ENCODE measurements at regions of chr6 and their contacts with region 1.

Region 1: DNA sequence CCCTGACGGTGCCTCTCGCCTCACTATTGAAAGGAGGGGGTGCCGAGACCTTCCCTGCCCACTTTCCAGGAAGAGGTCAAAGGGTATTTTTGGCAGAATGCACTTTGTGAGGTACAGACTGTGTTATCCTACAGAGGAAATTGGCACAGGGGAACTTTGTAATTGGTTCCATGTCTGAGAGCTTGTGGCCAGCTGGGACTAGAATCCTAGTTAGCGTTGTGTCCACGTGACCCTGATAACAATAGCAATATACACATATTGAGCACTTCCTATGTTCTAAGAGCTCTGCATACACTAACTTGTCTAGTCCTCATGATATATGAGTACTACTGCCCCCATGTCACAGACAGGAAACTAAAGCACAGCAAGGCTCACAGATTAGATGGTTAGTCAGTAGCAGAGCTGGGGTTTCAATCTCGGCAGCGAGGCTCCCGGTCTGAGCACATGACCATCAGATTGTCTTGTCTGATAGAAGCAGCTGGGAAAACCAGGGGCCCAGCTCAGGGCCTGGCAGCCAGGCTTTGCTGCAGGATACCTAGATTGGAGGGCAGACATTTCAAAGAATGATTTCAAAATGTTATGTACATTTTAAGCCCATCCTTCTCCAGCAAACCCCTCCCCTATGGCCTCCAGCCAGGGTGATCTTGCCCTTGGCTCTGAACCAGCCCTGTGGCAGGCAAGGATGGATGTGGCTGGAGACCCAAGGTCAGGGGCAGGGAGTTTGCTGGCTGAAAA is 1.4 kb downstream of the MAPK13 start:
- DNase-seq: peak; percentile 49
- ATAC-seq: peak; percentile 40
- H3K4me3 ChIP-seq: peak overlapping the region; percentile 19 to 78 (median 65)
- H3K4me3 Mint-ChIP-seq: peak overlapping the region; percentile 92
- H3K27ac ChIP-seq: peak overlapping the region; percentile 73 to 74
- H3K27ac Mint-ChIP-seq: peak overlapping the region; percentile 92
- H3K4me1 ChIP-seq: peaks cover 28 to 43% of the 10 kb centered on the region in 2 donors
- H3K4me1 Mint-ChIP-seq: peaks cover 56% of the 10 kb centered on the region
- H3K27me3 ChIP-seq: no peaks in the 10 kb centered on the region
- H3K27me3 Mint-ChIP-seq: no peaks in the 10 kb centered on the region
- CTCF ChIP-seq: no peak

Region 2: GRCh38 chr6:35797837-35798526 is 333.7 kb before region 1 on chr6:
- CTCF ChIA-PET with region 1: no interaction called
- POLR2A ChIA-PET with region 1: no interaction called
- intact Hi-C with region 1: no loop called
- DNase-seq: no peak
- ATAC-seq: no peak
- H3K4me3 ChIP-seq: no peak overlapping the region
- H3K4me3 Mint-ChIP-seq: no peak overlapping the region
- H3K27ac ChIP-seq: no peak overlapping the region
- H3K27ac Mint-ChIP-seq: no peak overlapping the region
- H3K4me1 ChIP-seq: no peaks in the 10 kb centered on the region
- H3K4me1 Mint-ChIP-seq: no peaks in the 10 kb centered on the region
- H3K27me3 ChIP-seq: peaks cover 0 to 10% (median 0%) of the 10 kb centered on the region in 4 experiments
- H3K27me3 Mint-ChIP-seq: peaks cover 4% of the 10 kb centered on the region
- CTCF ChIP-seq: no peak

Region 3: GRCh38 chr6:36104836-36105235 is 26.8 kb before region 1 on chr6:
- CTCF ChIA-PET with region 1: interaction called, 5 read pairs
- POLR2A ChIA-PET with region 1: no interaction called
- intact Hi-C with region 1: loop called (anchors 1 kb)
- DNase-seq: no peak
- ATAC-seq: no peak
- H3K4me3 ChIP-seq: no peak overlapping the region
- H3K4me3 Mint-ChIP-seq: no peak overlapping the region
- H3K27ac ChIP-seq: no peak overlapping the region
- H3K27ac Mint-ChIP-seq: no peak overlapping the region
- H3K4me1 ChIP-seq: peaks cover 33 to 36% of the 10 kb centered on the region in 2 donors
- H3K4me1 Mint-ChIP-seq: peaks cover 38% of the 10 kb centered on the region
- H3K27me3 ChIP-seq: no peaks in the 10 kb centered on the region
- H3K27me3 Mint-ChIP-seq: no peaks in the 10 kb centered on the region
- CTCF ChIP-seq: no peak

Region 4: DNA sequence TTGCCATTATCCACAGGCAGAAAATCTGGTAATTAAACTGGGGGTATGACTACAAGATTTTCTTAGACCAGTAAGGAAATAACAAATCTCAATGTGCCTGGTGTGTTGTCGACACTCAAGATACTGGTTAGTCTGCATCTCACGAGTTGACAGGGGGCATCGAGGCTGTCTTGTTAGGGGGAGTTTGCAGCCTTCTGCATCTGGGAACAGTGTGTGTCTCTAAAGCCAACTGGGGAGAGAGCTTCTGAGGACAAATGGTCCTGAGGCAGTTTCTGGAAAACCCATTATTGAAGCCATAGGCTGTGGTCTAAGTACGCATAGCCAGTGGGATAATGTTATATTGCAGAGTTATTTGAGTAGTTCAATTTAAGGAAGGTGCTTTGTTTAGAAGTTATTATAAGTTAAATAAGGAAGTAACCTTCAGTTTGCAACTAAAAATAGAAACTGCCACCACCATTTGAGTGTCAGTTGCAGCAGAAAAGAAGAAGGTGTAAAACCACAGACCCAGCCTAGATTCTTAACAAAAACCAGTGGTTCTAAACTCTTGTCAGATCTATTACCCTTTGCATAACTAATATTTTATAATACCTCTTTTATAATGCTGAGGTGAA is 16.8 kb before region 1 on chr6:
- CTCF ChIA-PET with region 1: interaction called, 3 read pairs
- POLR2A ChIA-PET with region 1: no interaction called
- intact Hi-C with region 1: loop called (anchors 2 kb)
- DNase-seq: peak; percentile 78
- ATAC-seq: peak; percentile 60
- H3K4me3 ChIP-seq: peak overlapping the region in 4 of 5 experiments; percentile 7 to 41 (median 20)
- H3K4me3 Mint-ChIP-seq: peak overlapping the region; percentile 77
- H3K27ac ChIP-seq: peak overlapping the region; percentile 75 to 83
- H3K27ac Mint-ChIP-seq: peak overlapping the region; percentile 92
- H3K4me1 ChIP-seq: peaks cover 92 to 93% of the 10 kb centered on the region in 2 donors
- H3K4me1 Mint-ChIP-seq: peaks cover 89% of the 10 kb centered on the region
- H3K27me3 ChIP-seq: no peaks in the 10 kb centered on the region
- H3K27me3 Mint-ChIP-seq: no peaks in the 10 kb centered on the region
- CTCF ChIP-seq: no peak

Region 5: DNA sequence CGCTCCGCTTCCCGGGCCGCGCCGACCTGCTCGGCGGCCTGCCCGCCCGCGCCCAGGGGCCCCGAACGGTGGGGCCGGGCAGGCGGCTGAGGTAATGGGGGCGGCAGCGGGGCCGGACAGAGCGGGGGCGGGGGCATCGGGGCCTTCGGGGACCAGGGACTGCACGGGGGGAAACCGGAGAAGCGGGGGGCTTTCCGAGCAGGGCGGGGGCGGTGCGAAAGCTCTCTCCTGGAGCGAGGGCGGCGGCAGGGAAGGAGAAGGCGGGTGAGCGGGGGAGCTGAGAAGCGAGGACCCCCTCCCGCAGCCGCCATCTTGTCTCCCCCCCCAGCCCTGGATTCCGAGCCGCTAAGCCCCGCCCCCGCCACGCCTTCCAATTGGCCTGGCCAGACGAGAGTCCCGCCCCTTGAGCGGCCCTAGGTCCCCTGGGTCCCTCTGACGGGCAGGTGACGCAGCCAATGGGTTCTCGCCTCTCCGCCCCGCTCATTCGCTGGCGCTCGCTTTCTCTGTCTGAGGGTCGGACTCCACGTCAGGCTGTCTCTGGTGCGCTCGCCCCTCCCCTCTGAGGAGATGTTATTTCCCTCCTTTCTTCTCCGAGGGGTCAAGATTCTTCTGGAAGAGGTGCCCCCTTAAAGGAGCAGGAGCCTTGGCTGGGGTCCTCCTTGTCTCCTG is 65.3 kb after region 1 on chr6:
- CTCF ChIA-PET with region 1: interaction called, 5 read pairs
- POLR2A ChIA-PET with region 1: interaction called, 11 read pairs
- intact Hi-C with region 1: loop called (anchors 2 kb)
- DNase-seq: peak; percentile 98
- ATAC-seq: peak; percentile 90
- H3K4me3 ChIP-seq: peak overlapping the region; percentile 17 to 84 (median 62)
- H3K4me3 Mint-ChIP-seq: peak overlapping the region; percentile 94
- H3K27ac ChIP-seq: peak overlapping the region; percentile 78 to 79
- H3K27ac Mint-ChIP-seq: peak overlapping the region; percentile 96
- H3K4me1 ChIP-seq: peaks cover 21 to 22% of the 10 kb centered on the region in 2 donors
- H3K4me1 Mint-ChIP-seq: peaks cover 36% of the 10 kb centered on the region
- H3K27me3 ChIP-seq: no peaks in the 10 kb centered on the region
- H3K27me3 Mint-ChIP-seq: no peaks in the 10 kb centered on the region
- CTCF ChIP-seq: no peak